H1 (cell line): ENCODE measurements at regions of chr2 and their contacts with region 1.

Region 1: GRCh38 chr2:231463698-231464575 is at the start of gene NCL:
- DNase-seq: no peak
- H3K4me3 ChIP-seq: peak within 1 kb of the TSS; percentile 85 to 97 (median 94)
- H3K27ac ChIP-seq: peak within 1 kb of the TSS; percentile 99
- H3K4me1 ChIP-seq: peaks cover 0 to 20% (median 6%) of the 10 kb centered on the region in 4 experiments; a peak in 6 of 7 replicates
- H3K27me3 ChIP-seq: no peaks in the 10 kb centered on the region
- CTCF ChIP-seq: no peak
- EP300 ChIP-seq: no peak
- POLR2A ChIP-seq: peak; percentile 98 to 99
- RAD21 ChIP-seq: no peak
- total RNA-seq, gene NCL: 1,442 and 1,478 TPM in 2 replicates

Region 2: DNA sequence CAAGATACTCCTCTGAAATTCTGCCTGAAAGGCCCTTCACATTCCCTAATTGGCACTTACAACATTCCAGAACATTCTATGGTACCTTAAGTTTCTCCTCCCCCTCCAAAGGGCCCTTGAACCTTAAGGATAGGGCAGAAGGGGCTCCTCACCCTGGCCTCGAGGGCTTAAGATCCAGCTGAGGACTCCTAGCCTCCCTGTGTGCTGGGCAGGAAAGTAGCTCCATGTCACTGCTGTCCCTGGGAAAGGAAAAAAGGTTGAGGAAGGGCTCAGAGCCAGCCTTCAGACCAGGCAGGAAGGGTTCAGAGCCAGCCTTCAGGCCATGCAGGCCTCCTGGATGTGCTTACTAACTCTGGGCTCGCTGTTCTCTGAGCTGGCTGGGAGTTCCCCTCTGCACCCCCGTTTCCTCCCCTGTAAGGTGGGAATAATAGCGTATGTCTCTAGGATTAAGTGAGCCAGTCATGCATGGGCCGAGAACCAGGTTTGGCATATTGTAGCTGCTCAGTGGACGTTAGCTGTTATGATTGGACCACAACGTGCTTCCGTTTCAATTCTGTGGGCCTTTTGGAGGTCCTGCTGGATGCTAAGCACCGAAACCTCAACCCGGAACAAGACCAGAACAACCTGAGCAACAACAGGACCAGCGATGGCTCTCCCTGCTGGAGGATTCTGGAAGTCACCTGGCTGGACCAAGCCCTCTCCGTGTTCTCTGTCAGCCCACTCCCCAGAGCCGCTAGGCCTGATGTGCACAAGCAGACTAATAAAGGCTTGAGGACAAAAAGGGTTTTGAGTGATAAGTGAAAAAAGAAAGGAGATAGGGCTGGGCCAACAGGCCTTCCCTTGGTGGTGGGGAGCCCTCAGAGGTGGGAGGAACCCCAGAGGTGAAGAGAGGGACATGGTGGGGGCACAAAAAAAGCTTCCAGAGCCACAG is 69.5 kb before region 1 on chr2:
- CTCF ChIA-PET with region 1: interaction called, 3 read pairs
- POLR2A ChIA-PET with region 1: interaction called, 14 read pairs
- DNase-seq: peak in 1 of 2 experiments; percentile 78
- H3K4me3 ChIP-seq: peak overlapping the region in 2 of 4 experiments; percentile 46 to 74; a peak in 5 of 8 replicates
- H3K27ac ChIP-seq: no peak overlapping the region
- H3K4me1 ChIP-seq: peaks cover 3 to 37% (median 20%) of the 10 kb centered on the region in 4 experiments
- H3K27me3 ChIP-seq: no peaks in the 10 kb centered on the region
- CTCF ChIP-seq: peak in 2 of 3 experiments; percentile 67 to 78; a peak in 3 of 4 replicates
- EP300 ChIP-seq: no peak
- POLR2A ChIP-seq: no peak
- RAD21 ChIP-seq: peak; percentile 58 to 75

Region 3: DNA sequence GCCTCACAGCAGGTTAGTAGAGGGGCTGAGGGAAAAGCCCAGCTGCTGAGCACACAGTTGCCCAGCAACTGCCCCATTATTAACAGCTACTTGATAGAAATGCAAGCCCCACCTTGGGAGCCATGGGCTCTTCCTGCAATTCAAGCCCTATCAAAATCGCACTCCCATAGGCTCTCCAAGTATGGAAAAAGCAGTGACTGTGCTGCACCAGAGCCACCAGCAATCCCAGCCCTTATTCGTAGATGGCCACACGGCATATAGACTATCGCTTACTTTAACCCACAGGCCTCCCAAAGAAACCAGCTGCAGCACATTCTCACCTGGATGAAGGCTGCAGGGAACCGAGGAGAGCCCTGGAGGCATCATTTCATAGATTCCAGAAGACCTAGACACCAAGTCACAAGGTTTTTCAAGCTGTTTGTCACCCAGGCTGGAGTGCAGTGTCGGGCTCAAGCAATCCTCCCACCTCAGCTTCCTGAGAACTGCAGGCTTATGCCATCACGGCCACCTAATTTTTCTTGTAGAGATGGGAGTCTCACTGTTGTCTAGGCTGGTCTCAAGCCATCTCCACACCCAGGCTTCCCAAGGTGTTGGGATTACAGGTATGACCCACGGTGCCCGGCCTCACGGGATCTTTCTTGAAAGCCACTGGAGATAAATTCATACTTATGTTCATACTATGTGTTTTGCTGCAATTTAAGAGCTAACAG is 11.0 kb before region 1 on chr2:
- CTCF ChIA-PET with region 1: interaction called, 12 read pairs
- POLR2A ChIA-PET with region 1: interaction called, 431 read pairs
- DNase-seq: peak in 1 of 2 experiments; percentile 65
- H3K4me3 ChIP-seq: no peak overlapping the region
- H3K27ac ChIP-seq: peak overlapping the region; percentile 44; the same call in 1 of the 2 replicates
- H3K4me1 ChIP-seq: peaks cover 0 to 5% (median 2%) of the 10 kb centered on the region in 4 experiments; a peak in 3 of 7 replicates
- H3K27me3 ChIP-seq: no peaks in the 10 kb centered on the region
- CTCF ChIP-seq: no peak
- EP300 ChIP-seq: no peak
- POLR2A ChIP-seq: peak; percentile 52 to 83; a peak in 2 of 3 replicates
- RAD21 ChIP-seq: no peak

Region 4: GRCh38 chr2:231497651-231498050 is 33.7 kb after region 1 on chr2:
- CTCF ChIA-PET with region 1: no interaction called
- POLR2A ChIA-PET with region 1: interaction called, 40 read pairs
- DNase-seq: no peak
- H3K4me3 ChIP-seq: no peak overlapping the region
- H3K27ac ChIP-seq: no peak overlapping the region
- H3K4me1 ChIP-seq: no peaks in the 10 kb centered on the region
- H3K27me3 ChIP-seq: no peaks in the 10 kb centered on the region
- CTCF ChIP-seq: no peak
- EP300 ChIP-seq: no peak
- POLR2A ChIP-seq: no peak
- RAD21 ChIP-seq: no peak

Region 5: GRCh38 chr2:231522799-231523180 is 58.9 kb after region 1 on chr2:
- CTCF ChIA-PET with region 1: interaction called, 4 read pairs
- POLR2A ChIA-PET with region 1: interaction called, 17 read pairs
- DNase-seq: no peak
- H3K4me3 ChIP-seq: no peak overlapping the region
- H3K27ac ChIP-seq: no peak overlapping the region
- H3K4me1 ChIP-seq: peaks cover 0 to 4% (median 2%) of the 10 kb centered on the region in 4 experiments; a peak in 1 of 7 replicates
- H3K27me3 ChIP-seq: no peaks in the 10 kb centered on the region
- CTCF ChIP-seq: no peak
- EP300 ChIP-seq: no peak
- POLR2A ChIP-seq: no peak
- RAD21 ChIP-seq: no peak

Region 6: GRCh38 chr2:231752061-231752460 is 288.1 kb after region 1 on chr2:
- CTCF ChIA-PET with region 1: no interaction called
- POLR2A ChIA-PET with region 1: no interaction called
- DNase-seq: no peak
- H3K4me3 ChIP-seq: no peak overlapping the region
- H3K27ac ChIP-seq: no peak overlapping the region
- H3K4me1 ChIP-seq: peaks cover 0 to 7% (median 2%) of the 10 kb centered on the region in 4 experiments; a peak in 2 of 7 replicates
- H3K27me3 ChIP-seq: no peaks in the 10 kb centered on the region
- CTCF ChIP-seq: no peak
- EP300 ChIP-seq: no peak
- POLR2A ChIP-seq: no peak
- RAD21 ChIP-seq: no peak